ENCODE measurements at regions of chr14 and their contacts with region 1.

Region 1: GRCh38 chr14:64421166-64421565 is 33.0 kb downstream of the MTHFD1 start:
- DNase-seq: no peak
- ATAC-seq: no peak
- H3K4me3 ChIP-seq: no peak overlapping the region
- H3K4me3 Mint-ChIP-seq: no peak overlapping the region
- H3K27ac ChIP-seq: no peak overlapping the region
- H3K27ac Mint-ChIP-seq: no peak overlapping the region
- H3K4me1 ChIP-seq: no peaks in the 10 kb centered on the region
- H3K4me1 Mint-ChIP-seq: no peaks in the 10 kb centered on the region
- H3K27me3 ChIP-seq: no peaks in the 10 kb centered on the region
- H3K27me3 Mint-ChIP-seq: no peaks in the 10 kb centered on the region
- CTCF ChIP-seq: no peak

Region 2: GRCh38 chr14:64478634-64479250 is 57.6 kb after region 1 on chr14:
- CTCF ChIA-PET with region 1: no interaction called
- POLR2A ChIA-PET with region 1: no interaction called
- intact Hi-C with region 1: no loop called
- DNase-seq: peak in 4 of 14 experiments; percentile 20 to 63 (median 57)
- ATAC-seq: no peak
- H3K4me3 ChIP-seq: no peak overlapping the region
- H3K4me3 Mint-ChIP-seq: no peak overlapping the region
- H3K27ac ChIP-seq: no peak overlapping the region
- H3K27ac Mint-ChIP-seq: peak overlapping the region; percentile 25
- H3K4me1 ChIP-seq: no peaks in the 10 kb centered on the region
- H3K4me1 Mint-ChIP-seq: peaks cover 27% of the 10 kb centered on the region
- H3K27me3 ChIP-seq: no peaks in the 10 kb centered on the region
- H3K27me3 Mint-ChIP-seq: no peaks in the 10 kb centered on the region
- CTCF ChIP-seq: peak; percentile 75

Region 3: DNA sequence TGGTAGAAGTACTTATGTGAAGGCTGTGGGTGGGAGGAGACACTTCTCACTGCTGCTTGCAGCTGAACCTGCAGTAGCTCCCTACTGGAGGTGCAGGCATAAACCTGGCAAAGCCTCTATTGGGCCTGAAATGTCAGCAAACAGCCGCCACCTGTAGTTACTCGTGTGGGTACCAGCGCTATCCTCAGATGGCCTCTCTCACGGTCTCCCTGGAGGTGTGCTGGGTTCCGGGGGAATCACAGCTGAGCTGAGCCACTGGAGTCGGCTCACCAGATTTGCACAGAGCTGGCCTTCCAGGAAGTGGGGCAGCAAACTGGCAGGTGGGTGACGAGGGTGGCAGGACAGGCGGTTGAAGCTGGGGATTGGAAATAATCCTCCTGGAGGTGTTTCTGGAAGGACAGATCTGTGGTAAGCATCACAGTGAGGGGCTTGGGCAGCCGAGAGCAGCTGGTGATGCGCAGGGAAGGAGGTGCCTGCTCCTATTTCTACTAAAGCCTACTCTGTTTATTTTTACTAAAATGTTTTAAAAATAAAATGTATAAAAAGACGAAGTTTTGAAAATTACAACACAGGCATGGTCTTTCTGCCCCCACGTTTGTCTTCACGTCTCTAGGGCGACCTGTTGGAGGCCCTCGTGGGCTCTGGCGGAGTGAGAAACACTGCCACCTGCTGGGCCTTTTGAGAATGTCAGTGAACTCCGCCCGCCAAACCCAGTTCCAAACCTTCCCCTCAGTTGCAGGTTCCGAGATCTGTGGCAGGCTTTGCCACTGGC is 215.2 kb after region 1 on chr14:
- CTCF ChIA-PET with region 1: no interaction called
- POLR2A ChIA-PET with region 1: no interaction called
- intact Hi-C with region 1: loop called in 1 of 2 experiments (anchors 5 kb)
- DNase-seq: peak; percentile 44 to 83 (median 65)
- ATAC-seq: peak; percentile 95
- H3K4me3 ChIP-seq: no peak overlapping the region
- H3K4me3 Mint-ChIP-seq: no peak overlapping the region
- H3K27ac ChIP-seq: no peak overlapping the region
- H3K27ac Mint-ChIP-seq: no peak overlapping the region
- H3K4me1 ChIP-seq: peaks cover 6% of the 10 kb centered on the region
- H3K4me1 Mint-ChIP-seq: no peaks in the 10 kb centered on the region
- H3K27me3 ChIP-seq: peaks cover 0 to 9% of the 10 kb centered on the region in 2 experiments
- H3K27me3 Mint-ChIP-seq: peaks cover 11% of the 10 kb centered on the region
- CTCF ChIP-seq: peak; percentile 92

Measured in CD4-positive, alpha-beta T cell (primary cell).